ENCODE measurements at regions of chr1 and their contacts with region 1.

Region 1: GRCh38 chr1:67339623-67340343 is 32.1 kb downstream of the IL12RB2 start:
- DNase-seq: no peak
- H3K4me3 Mint-ChIP-seq: no peak overlapping the region
- H3K27ac Mint-ChIP-seq: peak overlapping the region; percentile 89
- H3K4me1 Mint-ChIP-seq: peaks cover 78% of the 10 kb centered on the region
- H3K27me3 Mint-ChIP-seq: no peaks in the 10 kb centered on the region

Region 2: GRCh38 chr1:66271216-66271903 is 1068.4 kb before region 1 on chr1:
- intact Hi-C with region 1: loop called (anchors 10 kb)
- DNase-seq: no peak
- H3K4me3 Mint-ChIP-seq: no peak overlapping the region
- H3K27ac Mint-ChIP-seq: peak overlapping the region; percentile 44
- H3K4me1 Mint-ChIP-seq: peaks cover 62% of the 10 kb centered on the region
- H3K27me3 Mint-ChIP-seq: peaks cover 21% of the 10 kb centered on the region

Region 3: GRCh38 chr1:66981679-66982078 is 358.1 kb before region 1 on chr1:
- intact Hi-C with region 1: loop called (anchors 10 kb)
- DNase-seq: peak; percentile 41
- H3K4me3 Mint-ChIP-seq: peak overlapping the region; percentile 69
- H3K27ac Mint-ChIP-seq: peak overlapping the region; percentile 69
- H3K4me1 Mint-ChIP-seq: peaks cover 27% of the 10 kb centered on the region
- H3K27me3 Mint-ChIP-seq: no peaks in the 10 kb centered on the region

Region 4: DNA sequence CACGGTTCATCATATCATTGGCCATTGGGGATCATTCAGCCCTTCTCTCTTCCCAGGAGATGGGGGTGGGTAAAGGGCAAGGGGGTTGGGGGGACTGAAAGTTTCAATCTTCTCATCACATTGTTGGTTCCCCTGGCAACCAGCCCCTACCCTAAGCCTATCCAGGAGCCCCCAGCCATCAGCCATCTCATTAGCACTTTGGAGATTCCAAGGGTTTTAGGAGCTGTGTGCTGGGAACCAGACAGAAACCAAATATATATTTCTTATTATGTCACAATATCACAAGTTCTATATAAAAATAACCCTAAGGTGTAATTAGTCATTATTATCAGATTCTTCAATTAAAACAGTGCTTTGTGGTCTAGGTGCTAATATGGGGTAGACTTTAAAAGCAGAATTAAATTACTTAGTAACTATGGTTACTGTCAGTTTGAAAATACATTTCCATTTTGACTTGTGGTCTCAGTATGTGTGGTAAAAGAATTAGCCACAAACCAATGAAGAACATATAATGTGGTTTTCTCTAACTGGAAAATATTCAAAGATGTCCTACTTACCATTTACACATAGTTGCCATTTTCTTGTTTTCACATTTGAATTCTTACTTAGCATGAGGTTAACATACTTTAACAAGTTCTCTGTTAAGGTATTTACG is 145.4 kb before region 1 on chr1:
- intact Hi-C with region 1: loop called (anchors 1 kb)
- DNase-seq: no peak
- H3K4me3 Mint-ChIP-seq: no peak overlapping the region
- H3K27ac Mint-ChIP-seq: peak overlapping the region; percentile 60
- H3K4me1 Mint-ChIP-seq: peaks cover 10% of the 10 kb centered on the region
- H3K27me3 Mint-ChIP-seq: no peaks in the 10 kb centered on the region

Region 5: GRCh38 chr1:67307251-67308060 is 32.3 kb before region 1 on chr1 and contains the start of gene IL12RB2:
- intact Hi-C with region 1: loop called (anchors 1 kb)
- DNase-seq: peak; percentile 57
- H3K4me3 Mint-ChIP-seq: peak within 1 kb of the TSS; percentile 94
- H3K27ac Mint-ChIP-seq: peak within 1 kb of the TSS; percentile 95
- H3K4me1 Mint-ChIP-seq: peaks cover 69% of the 10 kb centered on the region
- H3K27me3 Mint-ChIP-seq: no peaks in the 10 kb centered on the region
- total RNA-seq, gene IL12RB2: 108 TPM in 2 replicates

Region 6: DNA sequence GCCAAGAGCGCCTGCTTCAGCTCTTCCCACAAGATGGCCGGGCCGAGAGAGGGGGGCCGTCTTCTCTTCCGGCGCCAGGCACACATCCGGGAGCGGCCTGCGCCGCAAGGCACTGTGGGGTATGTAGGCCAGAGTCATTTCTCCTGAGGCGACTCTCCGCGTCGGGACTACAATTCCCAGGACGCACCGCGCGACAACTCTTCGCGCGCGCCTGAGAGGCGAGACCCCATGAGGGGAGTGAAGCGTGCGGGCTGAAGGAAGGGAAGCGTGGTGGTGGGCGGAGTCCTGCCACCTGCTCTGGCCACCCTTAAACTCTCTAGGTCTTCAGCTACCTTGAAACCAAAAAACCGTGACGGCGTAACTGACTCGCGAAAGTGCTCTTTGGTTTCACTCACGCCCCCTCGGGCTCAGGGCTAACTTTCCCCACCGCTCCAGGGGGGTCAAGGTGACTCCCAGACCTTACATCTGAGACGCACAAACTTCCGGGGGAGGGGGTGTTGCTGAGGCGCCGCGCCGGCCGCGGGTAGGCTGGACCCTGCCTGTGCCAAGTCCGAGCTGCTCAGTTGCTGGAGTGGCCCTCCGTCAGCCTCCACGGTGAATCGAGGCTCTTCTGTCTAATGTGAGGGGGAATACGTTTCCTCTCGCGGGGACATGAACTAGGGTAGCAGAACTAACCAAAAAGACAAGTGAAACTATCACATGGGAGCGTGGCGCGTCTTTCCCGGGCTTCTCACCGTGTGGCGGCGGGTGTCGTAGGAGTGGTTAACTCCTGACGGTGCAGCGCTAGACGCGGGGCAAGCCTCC is 90.8 kb after region 1 on chr1 and contains the start of gene SERBP1:
- intact Hi-C with region 1: loop called (anchors 2 kb)
- DNase-seq: peak; percentile 95
- H3K4me3 Mint-ChIP-seq: peak within 1 kb of the TSS; percentile 87
- H3K27ac Mint-ChIP-seq: peak within 1 kb of the TSS; percentile 95
- H3K4me1 Mint-ChIP-seq: peaks cover 48% of the 10 kb centered on the region
- H3K27me3 Mint-ChIP-seq: no peaks in the 10 kb centered on the region
- total RNA-seq, gene SERBP1: 484 and 491 TPM in 2 replicates